Right ventricle myocardium superior (tissue), 1 donor: ENCODE measurements at regions of chr15 and their contacts with region 1.

Region 1: DNA sequence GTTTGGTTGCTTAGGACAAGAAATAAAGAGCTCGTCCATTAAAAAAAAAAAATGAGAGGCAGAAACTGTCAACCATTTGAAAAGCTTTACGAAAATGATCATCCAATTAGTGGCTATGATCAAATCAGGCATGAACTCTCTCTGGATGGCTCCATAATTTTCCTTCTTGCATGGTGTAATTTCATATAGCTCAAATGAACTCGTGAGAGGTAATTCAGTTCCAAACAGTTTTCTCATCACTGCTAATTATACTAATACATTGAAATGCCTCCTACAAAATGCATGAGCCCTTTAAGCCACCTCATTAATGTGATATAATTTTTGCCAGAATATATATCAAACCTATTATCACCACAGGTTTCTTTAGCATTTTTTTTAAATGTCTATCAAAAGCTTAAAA is 239.5 kb upstream of the MEIS2 start:
- DNase-seq: no peak
- ATAC-seq: no peak

Region 2: DNA sequence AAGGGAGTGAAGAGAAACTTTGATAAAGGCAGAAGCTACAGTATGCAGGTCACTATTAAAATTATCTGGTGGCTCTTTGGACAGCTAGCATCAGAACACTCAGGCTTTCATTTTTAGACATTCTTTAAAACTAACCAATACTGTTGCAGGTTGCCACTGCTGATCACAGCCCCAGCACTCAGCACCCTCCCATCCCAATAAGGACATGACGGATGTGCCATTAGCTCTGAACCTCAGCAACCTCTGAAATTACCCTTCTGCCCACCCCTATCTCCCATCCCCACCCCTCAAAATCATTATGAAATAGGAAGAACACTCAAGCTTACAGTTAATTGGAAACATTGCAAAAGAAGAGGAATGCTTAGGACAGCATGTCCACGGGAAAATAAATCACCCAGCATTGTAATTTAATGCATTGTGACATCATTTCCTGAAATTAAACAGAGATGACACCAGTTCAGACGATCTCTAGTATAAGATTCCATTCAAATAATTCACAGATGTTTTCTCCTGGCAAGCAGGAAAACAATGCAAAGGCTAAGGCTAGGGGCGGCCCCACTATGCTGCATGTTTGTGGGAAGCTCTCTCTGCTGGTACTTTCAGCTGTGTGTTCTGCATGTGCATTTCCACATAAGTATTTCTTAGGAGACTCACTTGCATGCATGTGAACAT is 311.1 kb before region 1 on chr15:
- intact Hi-C with region 1: no loop called
- DNase-seq: no peak
- ATAC-seq: peak; percentile 7

Region 3: GRCh38 chr15:37291920-37292319 is 47.9 kb before region 1 on chr15:
- intact Hi-C with region 1: loop called (anchors 10 kb)
- DNase-seq: no peak
- ATAC-seq: no peak